ENCODE measurements at regions of chr4 and their contacts with region 1.

Region 1: GRCh38 chr4:38334810-38335537 is 329.0 kb upstream of the KLF3 start:
- DNase-seq: no peak
- H3K4me3 Mint-ChIP-seq: no peak overlapping the region
- H3K27ac Mint-ChIP-seq: peak overlapping the region; percentile 47
- H3K4me1 Mint-ChIP-seq: peaks cover 10% of the 10 kb centered on the region
- H3K27me3 Mint-ChIP-seq: no peaks in the 10 kb centered on the region
- CTCF ChIP-seq: no peak

Region 2: DNA sequence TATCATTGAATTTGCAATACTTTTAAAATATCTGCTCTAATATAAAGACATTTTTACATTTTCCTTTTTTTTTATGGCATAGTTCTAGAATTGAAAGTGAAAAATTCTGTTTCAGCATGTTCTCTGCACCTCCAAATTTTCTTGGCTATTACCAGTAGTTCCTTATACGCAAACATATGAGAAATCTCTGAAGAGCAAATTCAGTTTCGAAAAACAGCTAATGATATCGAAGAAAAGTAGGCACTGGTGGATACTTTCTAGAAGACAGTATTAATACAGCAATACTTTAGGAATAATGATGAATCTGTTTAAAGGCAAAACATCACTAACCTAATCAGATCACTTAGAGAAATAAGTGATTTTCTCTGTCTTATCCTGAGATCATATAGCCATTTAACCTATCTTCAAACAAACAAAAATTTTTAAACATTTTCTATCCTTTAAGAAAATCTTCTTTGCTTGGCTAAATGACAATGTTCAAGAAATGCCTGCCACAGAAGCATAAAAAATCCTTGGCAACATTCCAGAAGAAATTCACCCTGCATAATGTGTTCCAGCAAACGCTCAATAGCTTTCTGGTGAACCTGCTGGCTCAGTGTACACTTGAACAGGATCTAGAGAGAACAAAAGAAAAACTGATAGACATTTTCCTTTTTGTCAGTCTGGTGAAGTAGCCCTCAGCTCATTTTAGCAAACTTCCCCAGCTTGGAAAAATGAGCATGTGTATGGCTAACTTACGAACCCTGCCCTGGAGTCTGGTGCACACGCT is 277.9 kb after region 1 on chr4:
- CTCF ChIA-PET with region 1: no interaction called
- intact Hi-C with region 1: loop called (anchors 5 kb)
- DNase-seq: no peak
- H3K4me3 Mint-ChIP-seq: no peak overlapping the region
- H3K27ac Mint-ChIP-seq: no peak overlapping the region
- H3K4me1 Mint-ChIP-seq: peaks cover 34% of the 10 kb centered on the region
- H3K27me3 Mint-ChIP-seq: no peaks in the 10 kb centered on the region
- CTCF ChIP-seq: no peak